Naive thymus-derived CD4-positive, alpha-beta T cell (primary cell): ENCODE measurements at regions of chr19 and their contacts with region 1.

Region 1: DNA sequence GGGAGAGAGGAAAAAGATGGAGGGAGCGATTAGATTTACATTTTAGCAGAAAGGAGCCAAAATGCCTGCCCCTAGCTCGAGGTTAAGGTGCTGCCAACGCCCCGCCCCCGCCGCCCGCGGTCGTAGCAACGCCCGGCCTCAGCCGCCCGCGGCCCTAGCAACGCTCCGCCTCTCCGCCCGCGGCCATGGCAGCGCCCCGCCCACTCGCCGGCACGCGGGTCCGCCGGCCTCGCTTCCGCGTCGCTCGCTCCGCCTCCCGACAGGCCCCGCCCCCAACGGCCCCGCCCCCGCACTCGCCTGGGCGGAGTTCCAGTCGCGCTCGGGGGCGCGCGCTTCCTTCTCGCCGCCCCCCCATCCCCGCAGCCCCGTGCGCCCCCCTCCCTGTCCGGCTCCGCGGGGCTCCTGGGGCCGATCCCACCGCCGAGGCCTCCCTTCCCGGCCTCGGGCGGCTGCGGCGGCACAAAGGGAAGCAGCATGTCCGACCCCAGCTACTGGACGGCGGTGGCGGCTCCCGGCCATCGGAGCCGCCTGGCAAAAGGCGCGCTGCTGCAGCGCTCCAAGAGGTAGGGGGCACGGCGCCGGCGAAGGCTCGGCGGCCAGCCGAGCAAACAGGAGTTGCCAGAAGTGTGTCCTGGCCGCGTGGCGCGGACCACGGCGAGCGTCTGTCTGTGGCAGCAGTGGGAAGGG is 20.3 kb downstream of the MAST3 start:
- DNase-seq: peak; percentile 90 to 99 (median 95)
- ATAC-seq: peak; percentile 94
- H3K4me3 ChIP-seq: peak overlapping the region; percentile 71
- H3K4me3 Mint-ChIP-seq: peak overlapping the region; percentile 82 to 96 (median 90)
- H3K27ac ChIP-seq: peak overlapping the region; percentile 80
- H3K27ac Mint-ChIP-seq: peak overlapping the region; percentile 84 to 99 (median 96)
- H3K4me1 ChIP-seq: peaks cover 22 to 24% of the 10 kb centered on the region in 2 donors
- H3K4me1 Mint-ChIP-seq: peaks cover 24 to 47% (median 37%) of the 10 kb centered on the region in 7 donors
- H3K27me3 ChIP-seq: no peaks in the 10 kb centered on the region
- H3K27me3 Mint-ChIP-seq: no peaks in the 10 kb centered on the region

Region 2: DNA sequence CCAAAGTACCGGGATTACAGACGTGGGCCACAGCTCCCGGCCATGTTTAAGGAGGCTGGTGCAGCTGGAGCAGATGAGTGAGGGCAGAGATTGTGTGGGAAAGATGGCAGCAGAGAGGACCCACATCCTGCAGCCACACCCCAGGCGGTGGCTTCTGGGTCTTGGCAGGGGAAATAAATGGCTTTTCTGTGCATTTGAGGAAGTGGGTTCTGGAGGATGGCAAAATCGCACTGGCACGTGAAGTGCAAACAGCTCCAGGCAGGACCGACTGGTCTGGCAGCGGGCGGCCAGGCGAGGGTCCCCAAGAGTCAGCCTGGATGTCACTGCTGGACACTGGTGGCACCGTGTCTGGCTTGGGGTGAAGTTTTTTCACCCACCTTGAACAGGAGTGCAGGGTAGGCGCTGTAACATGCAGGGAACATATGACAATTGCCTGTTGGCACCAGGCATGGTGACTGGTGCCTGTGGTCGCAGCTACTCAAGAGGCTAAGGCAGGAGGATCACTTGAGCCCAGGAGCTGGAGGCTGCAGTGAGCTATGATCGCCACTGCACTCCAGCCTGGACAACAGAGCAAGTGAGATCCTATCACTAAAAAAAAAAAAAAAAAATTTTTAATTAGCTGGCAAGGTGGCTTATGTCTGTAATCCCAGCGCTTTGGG is 314.4 kb before region 1 on chr19:
- CTCF ChIA-PET with region 1: no interaction called
- POLR2A ChIA-PET with region 1: no interaction called
- intact Hi-C with region 1: no loop called
- DNase-seq: peak in 6 of 9 donors; percentile 60 to 72 (median 69)
- ATAC-seq: peak; percentile 77
- H3K4me3 ChIP-seq: peak overlapping the region; percentile 38
- H3K4me3 Mint-ChIP-seq: peak overlapping the region; percentile 75 to 88 (median 82)
- H3K27ac ChIP-seq: peak overlapping the region; percentile 25
- H3K27ac Mint-ChIP-seq: peak overlapping the region; percentile 76 to 97 (median 88)
- H3K4me1 ChIP-seq: peaks cover 15 to 34% of the 10 kb centered on the region in 2 donors
- H3K4me1 Mint-ChIP-seq: peaks cover 19 to 55% (median 40%) of the 10 kb centered on the region in 7 donors
- H3K27me3 ChIP-seq: no peaks in the 10 kb centered on the region
- H3K27me3 Mint-ChIP-seq: peaks cover 0 to 12% (median 0%) of the 10 kb centered on the region in 5 donors

Region 3: GRCh38 chr19:17883627-17884410 is 234.0 kb before region 1 on chr19:
- CTCF ChIA-PET with region 1: no interaction called
- POLR2A ChIA-PET with region 1: no interaction called
- intact Hi-C with region 1: no loop called
- DNase-seq: no peak
- ATAC-seq: no peak
- H3K4me3 ChIP-seq: no peak overlapping the region
- H3K4me3 Mint-ChIP-seq: no peak overlapping the region
- H3K27ac ChIP-seq: no peak overlapping the region
- H3K27ac Mint-ChIP-seq: no peak overlapping the region
- H3K4me1 ChIP-seq: no peaks in the 10 kb centered on the region
- H3K4me1 Mint-ChIP-seq: no peaks in the 10 kb centered on the region
- H3K27me3 ChIP-seq: no peaks in the 10 kb centered on the region
- H3K27me3 Mint-ChIP-seq: no peaks in the 10 kb centered on the region

Region 4: DNA sequence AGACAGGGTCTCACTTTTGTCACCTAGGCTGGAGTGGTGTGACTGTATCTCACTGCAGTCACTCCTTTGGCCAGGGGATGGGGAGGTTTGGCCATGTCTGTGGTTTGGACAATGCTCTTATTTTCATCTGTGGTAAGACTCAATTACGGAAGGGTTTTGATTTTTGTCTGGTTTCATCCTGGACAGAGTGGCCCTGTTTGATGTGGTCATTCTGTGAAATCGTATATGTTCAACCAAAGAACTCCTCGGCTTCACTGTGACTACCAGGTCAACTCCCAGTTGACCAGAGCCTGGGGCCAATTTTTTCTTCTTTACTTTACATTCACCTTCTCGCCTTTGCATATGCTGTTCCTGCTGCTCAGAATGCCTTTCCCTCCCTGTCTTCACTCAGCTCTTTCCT is 191.8 kb before region 1 on chr19:
- CTCF ChIA-PET with region 1: no interaction called
- POLR2A ChIA-PET with region 1: no interaction called
- intact Hi-C with region 1: no loop called
- DNase-seq: no peak
- ATAC-seq: no peak
- H3K4me3 ChIP-seq: no peak overlapping the region
- H3K4me3 Mint-ChIP-seq: no peak overlapping the region
- H3K27ac ChIP-seq: no peak overlapping the region
- H3K27ac Mint-ChIP-seq: no peak overlapping the region
- H3K4me1 ChIP-seq: no peaks in the 10 kb centered on the region
- H3K4me1 Mint-ChIP-seq: peaks cover 0 to 5% (median 0%) of the 10 kb centered on the region in 7 donors
- H3K27me3 ChIP-seq: no peaks in the 10 kb centered on the region
- H3K27me3 Mint-ChIP-seq: peaks cover 0 to 5% (median 0%) of the 10 kb centered on the region in 5 donors

Region 5: DNA sequence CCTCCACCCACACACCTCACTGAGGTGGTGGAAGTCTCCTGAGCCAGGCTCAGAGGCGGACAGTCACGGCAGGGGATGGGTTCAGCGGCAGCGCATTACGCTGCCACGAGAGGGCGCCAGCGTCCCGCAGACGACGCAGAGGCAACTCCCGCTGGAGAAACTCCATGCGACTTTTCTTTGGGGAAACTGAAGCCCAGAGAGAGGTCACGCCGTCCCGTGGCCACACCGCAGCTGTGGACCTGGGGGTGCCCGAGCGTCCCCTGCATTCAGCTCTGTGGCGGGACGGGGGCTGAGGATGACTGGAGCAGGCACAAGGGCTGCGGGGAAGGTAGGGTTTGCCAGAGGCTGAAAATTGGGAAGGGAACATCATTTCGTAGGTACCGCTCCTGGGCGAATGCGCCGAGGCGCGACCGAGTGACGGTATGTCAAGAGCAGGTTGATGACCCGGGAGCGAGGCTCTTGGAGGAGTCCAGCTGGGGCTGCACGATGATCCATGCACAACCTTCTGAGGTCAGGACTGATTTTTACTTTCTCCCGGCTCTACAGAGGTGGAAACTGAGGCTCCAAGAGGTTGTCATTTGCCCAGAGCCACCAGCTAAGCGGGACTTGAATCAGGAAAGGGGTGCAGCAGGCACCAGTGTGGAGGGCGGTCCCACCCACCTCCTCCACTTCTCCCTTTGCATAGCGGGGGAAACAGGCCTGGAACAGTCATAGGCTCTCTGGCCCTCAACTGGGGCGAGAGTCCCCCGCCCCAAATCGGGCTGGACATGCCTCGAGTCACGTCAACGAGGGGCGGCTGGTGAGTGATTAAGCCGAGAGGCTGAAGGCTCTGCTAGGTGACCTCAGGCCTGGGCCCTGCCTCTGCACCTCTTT is 110.6 kb before region 1 on chr19:
- CTCF ChIA-PET with region 1: interaction called, 4 read pairs
- POLR2A ChIA-PET with region 1: interaction called, 4 read pairs
- intact Hi-C with region 1: loop called in 1 of 2 experiments (anchors 2 kb)
- DNase-seq: peak; percentile 70 to 88 (median 82)
- ATAC-seq: peak; percentile 74
- H3K4me3 ChIP-seq: peak overlapping the region; percentile 53
- H3K4me3 Mint-ChIP-seq: peak overlapping the region; percentile 86 to 98 (median 92)
- H3K27ac ChIP-seq: peak overlapping the region; percentile 91
- H3K27ac Mint-ChIP-seq: peak overlapping the region; percentile 71 to 99 (median 94)
- H3K4me1 ChIP-seq: peaks cover 28 to 36% of the 10 kb centered on the region in 2 donors
- H3K4me1 Mint-ChIP-seq: peaks cover 19 to 45% (median 28%) of the 10 kb centered on the region in 7 donors
- H3K27me3 ChIP-seq: no peaks in the 10 kb centered on the region
- H3K27me3 Mint-ChIP-seq: no peaks in the 10 kb centered on the region

Region 6: DNA sequence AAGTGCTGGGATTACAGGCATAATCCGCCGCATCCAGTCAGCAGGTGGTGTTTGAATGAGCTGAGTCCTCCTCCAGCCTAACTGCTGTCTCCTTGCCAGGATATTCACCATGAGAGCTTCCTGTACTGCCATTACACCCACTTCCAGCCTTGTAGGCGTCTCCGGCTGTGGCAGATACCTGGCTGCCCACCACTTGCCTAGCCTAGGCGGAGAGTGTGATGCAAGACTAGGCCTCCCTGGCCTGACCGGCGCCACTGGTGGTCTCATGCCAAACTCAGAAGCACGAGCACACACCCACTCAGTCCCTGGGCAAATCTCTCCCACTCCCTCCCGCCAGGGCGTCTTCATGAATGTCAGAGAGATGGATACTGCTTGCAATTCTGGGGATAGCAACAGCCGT is 47.7 kb before region 1 on chr19:
- CTCF ChIA-PET with region 1: no interaction called
- POLR2A ChIA-PET with region 1: no interaction called
- intact Hi-C with region 1: no loop called
- DNase-seq: no peak
- ATAC-seq: no peak
- H3K4me3 ChIP-seq: no peak overlapping the region
- H3K4me3 Mint-ChIP-seq: no peak overlapping the region
- H3K27ac ChIP-seq: no peak overlapping the region
- H3K27ac Mint-ChIP-seq: peak overlapping the region in 1 of 9 donors; percentile 46
- H3K4me1 ChIP-seq: peaks cover 8 to 13% of the 10 kb centered on the region in 2 donors
- H3K4me1 Mint-ChIP-seq: peaks cover 6 to 15% (median 13%) of the 10 kb centered on the region in 7 donors
- H3K27me3 ChIP-seq: no peaks in the 10 kb centered on the region
- H3K27me3 Mint-ChIP-seq: no peaks in the 10 kb centered on the region

Region 7: DNA sequence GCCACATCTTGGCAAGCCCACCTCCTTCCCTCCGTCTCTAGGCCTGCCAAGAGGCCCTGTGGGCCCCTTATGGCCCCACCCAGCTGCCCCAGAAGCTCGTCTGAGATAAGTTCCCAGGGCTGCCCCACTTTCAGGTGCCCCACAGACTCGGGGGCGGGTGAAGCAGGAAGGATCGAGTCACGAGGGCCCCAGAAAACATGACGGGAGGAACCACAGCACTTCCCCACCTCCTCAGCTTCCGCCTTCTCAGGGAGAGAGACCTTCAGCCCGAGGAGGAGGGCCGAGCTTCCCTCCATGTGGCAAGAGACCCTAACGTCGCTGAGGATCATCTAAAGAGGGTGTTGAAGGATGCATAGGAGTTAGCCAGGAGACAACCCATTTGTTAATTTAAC is 26.6 kb before region 1 on chr19:
- CTCF ChIA-PET with region 1: interaction called, 13 read pairs
- POLR2A ChIA-PET with region 1: interaction called, 22 read pairs
- intact Hi-C with region 1: loop called (anchors 1 to 2 kb)
- DNase-seq: peak; percentile 52 to 84 (median 79)
- ATAC-seq: peak; percentile 84
- H3K4me3 ChIP-seq: no peak overlapping the region
- H3K4me3 Mint-ChIP-seq: peak overlapping the region; percentile 59 to 95 (median 74)
- H3K27ac ChIP-seq: peak overlapping the region; percentile 82
- H3K27ac Mint-ChIP-seq: peak overlapping the region; percentile 94 to 99 (median 98)
- H3K4me1 ChIP-seq: peaks cover 54 to 69% of the 10 kb centered on the region in 2 donors
- H3K4me1 Mint-ChIP-seq: peaks cover 35 to 79% (median 64%) of the 10 kb centered on the region in 7 donors
- H3K27me3 ChIP-seq: no peaks in the 10 kb centered on the region
- H3K27me3 Mint-ChIP-seq: no peaks in the 10 kb centered on the region

Region 8: GRCh38 chr19:18128044-18128443 is 10.2 kb after region 1 on chr19:
- CTCF ChIA-PET with region 1: interaction called, 3 read pairs
- POLR2A ChIA-PET with region 1: interaction called, 19 read pairs
- intact Hi-C with region 1: no loop called
- DNase-seq: no peak
- ATAC-seq: peak; percentile 87
- H3K4me3 ChIP-seq: no peak overlapping the region
- H3K4me3 Mint-ChIP-seq: no peak overlapping the region
- H3K27ac ChIP-seq: no peak overlapping the region
- H3K27ac Mint-ChIP-seq: peak overlapping the region in 2 of 9 donors; percentile 14 to 79
- H3K4me1 ChIP-seq: peaks cover 0 to 7% of the 10 kb centered on the region in 2 donors
- H3K4me1 Mint-ChIP-seq: peaks cover 0 to 13% (median 0%) of the 10 kb centered on the region in 7 donors
- H3K27me3 ChIP-seq: no peaks in the 10 kb centered on the region
- H3K27me3 Mint-ChIP-seq: no peaks in the 10 kb centered on the region

Region 9: DNA sequence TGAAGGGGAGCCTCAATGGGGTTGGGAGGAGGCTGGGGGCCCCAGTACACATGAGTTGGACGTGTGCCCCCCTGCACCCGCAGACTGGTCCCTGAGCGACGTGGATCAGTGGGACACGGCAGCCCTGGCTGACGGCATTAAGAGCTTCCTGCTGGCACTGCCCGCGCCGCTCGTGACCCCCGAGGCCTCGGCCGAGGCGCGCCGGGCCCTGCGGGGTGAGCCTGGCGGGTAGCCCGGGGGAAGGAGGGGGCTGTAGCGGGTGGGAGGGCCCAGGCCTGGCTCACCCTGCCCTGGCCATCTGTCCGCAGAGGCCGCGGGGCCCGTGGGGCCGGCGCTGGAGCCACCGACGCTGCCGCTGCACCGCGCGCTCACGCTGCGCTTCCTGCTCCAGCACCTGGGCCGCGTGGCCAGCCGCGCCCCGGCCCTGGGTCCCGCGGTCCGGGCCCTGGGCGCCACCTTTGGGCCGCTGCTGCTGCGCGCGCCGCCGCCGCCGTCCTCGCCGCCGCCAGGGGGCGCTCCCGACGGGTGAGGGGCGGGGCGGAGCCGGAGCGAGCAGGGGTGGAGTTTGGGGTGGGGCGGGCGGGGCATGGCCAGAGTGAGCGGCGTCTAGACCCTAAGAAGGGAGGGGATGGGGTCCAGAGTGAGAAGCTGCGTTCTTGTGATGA is 43.3 kb after region 1 on chr19:
- CTCF ChIA-PET with region 1: interaction called, 14 read pairs
- POLR2A ChIA-PET with region 1: interaction called, 10 read pairs
- intact Hi-C with region 1: loop called in 1 of 2 experiments (anchors 1 kb)
- DNase-seq: peak; percentile 64 to 96 (median 80)
- ATAC-seq: peak; percentile 100
- H3K4me3 ChIP-seq: no peak overlapping the region
- H3K4me3 Mint-ChIP-seq: peak overlapping the region in 8 of 10 donors; percentile 39 to 71 (median 56)
- H3K27ac ChIP-seq: peak overlapping the region; percentile 62
- H3K27ac Mint-ChIP-seq: peak overlapping the region in 4 of 9 donors; percentile 20 to 72 (median 45)
- H3K4me1 ChIP-seq: peaks cover 0 to 13% of the 10 kb centered on the region in 2 donors
- H3K4me1 Mint-ChIP-seq: peaks cover 0 to 18% (median 12%) of the 10 kb centered on the region in 7 donors
- H3K27me3 ChIP-seq: no peaks in the 10 kb centered on the region
- H3K27me3 Mint-ChIP-seq: no peaks in the 10 kb centered on the region

Region 10: DNA sequence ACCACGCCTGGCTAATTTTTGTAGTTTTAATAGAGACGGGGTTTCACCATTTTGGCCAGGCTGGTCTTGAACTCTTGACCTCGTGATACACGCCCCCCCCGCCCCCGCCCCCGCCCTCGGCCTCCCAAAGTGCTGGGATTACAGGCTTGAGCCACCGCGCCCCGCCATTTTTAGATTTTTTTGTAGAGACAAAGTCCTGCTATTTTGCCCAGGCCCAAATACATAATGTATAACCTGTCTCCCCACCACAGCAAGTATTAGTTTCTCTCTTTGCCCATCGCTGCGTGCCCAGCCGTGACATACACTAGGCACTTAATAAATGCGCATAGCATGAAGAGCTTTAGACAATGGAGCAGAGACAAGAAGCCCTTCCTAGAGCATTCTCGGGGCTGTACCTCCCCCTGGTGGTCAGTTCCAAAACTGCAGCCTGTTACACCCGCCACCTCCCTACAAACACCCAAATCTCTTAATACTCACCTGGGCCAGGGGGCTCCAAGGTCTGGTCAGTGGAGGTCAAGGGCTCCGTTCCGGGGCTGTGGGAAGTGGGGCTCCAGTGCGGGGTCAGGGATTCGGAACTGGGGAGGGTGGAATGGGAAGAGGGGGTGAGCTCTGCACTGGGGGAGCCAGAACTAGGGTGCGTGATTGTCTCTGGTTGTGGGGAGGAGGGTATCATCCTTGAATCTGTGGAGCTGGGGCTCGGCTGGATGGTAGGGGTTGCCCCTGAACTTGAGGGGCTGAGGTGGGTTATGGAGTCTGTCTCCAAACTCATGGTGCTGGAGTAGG is 133.9 kb after region 1 on chr19:
- CTCF ChIA-PET with region 1: interaction called, 5 read pairs
- POLR2A ChIA-PET with region 1: no interaction called
- intact Hi-C with region 1: loop called in 1 of 2 experiments (anchors 1 kb)
- DNase-seq: peak; percentile 65 to 87 (median 77)
- ATAC-seq: peak; percentile 90
- H3K4me3 ChIP-seq: no peak overlapping the region
- H3K4me3 Mint-ChIP-seq: no peak overlapping the region
- H3K27ac ChIP-seq: no peak overlapping the region
- H3K27ac Mint-ChIP-seq: peak overlapping the region in 2 of 9 donors; percentile 2 to 62
- H3K4me1 ChIP-seq: no peaks in the 10 kb centered on the region
- H3K4me1 Mint-ChIP-seq: peaks cover 0 to 7% (median 5%) of the 10 kb centered on the region in 7 donors
- H3K27me3 ChIP-seq: no peaks in the 10 kb centered on the region
- H3K27me3 Mint-ChIP-seq: peaks cover 22 to 36% (median 34%) of the 10 kb centered on the region in 5 donors